ENCODE measurements at regions of chr6 and their contacts with region 1.

Region 1: GRCh38 chr6:158207422-158207788 is 39.3 kb downstream of the GTF2H5 start:
- DNase-seq: no peak
- ATAC-seq: no peak
- H3K4me3 ChIP-seq: no peak overlapping the region
- H3K27ac ChIP-seq: no peak overlapping the region
- H3K4me1 ChIP-seq: peaks cover 3% of the 10 kb centered on the region in 2 experiments; a peak in 2 of 5 replicates
- H3K27me3 ChIP-seq: peaks cover 31 to 32% of the 10 kb centered on the region in 2 experiments
- CTCF ChIP-seq: no peak
- EP300 ChIP-seq: no peak
- POLR2A ChIP-seq: no peak
- RAD21 ChIP-seq: no peak

Region 2: GRCh38 chr6:158143700-158144099 is 63.7 kb before region 1 on chr6:
- CTCF ChIA-PET with region 1: interaction called, 7 read pairs
- POLR2A ChIA-PET with region 1: no interaction called
- in situ Hi-C with region 1: no loop called
- intact Hi-C with region 1: loop called (anchors 1 kb)
- DNase-seq: peak; percentile 28 to 55 (median 48)
- ATAC-seq: peak; percentile 89
- H3K4me3 ChIP-seq: no peak overlapping the region
- H3K27ac ChIP-seq: no peak overlapping the region
- H3K4me1 ChIP-seq: no peaks in the 10 kb centered on the region
- H3K27me3 ChIP-seq: no peaks in the 10 kb centered on the region
- CTCF ChIP-seq: peak; percentile 67 to 70 (median 68)
- EP300 ChIP-seq: no peak
- POLR2A ChIP-seq: no peak
- RAD21 ChIP-seq: peak in 1 of 2 experiments; percentile 65; a peak in 3 of 4 replicates

Measured in K562 (cell line).